ENCODE measurements at regions of chr19 and their contacts with region 1.

Region 1: DNA sequence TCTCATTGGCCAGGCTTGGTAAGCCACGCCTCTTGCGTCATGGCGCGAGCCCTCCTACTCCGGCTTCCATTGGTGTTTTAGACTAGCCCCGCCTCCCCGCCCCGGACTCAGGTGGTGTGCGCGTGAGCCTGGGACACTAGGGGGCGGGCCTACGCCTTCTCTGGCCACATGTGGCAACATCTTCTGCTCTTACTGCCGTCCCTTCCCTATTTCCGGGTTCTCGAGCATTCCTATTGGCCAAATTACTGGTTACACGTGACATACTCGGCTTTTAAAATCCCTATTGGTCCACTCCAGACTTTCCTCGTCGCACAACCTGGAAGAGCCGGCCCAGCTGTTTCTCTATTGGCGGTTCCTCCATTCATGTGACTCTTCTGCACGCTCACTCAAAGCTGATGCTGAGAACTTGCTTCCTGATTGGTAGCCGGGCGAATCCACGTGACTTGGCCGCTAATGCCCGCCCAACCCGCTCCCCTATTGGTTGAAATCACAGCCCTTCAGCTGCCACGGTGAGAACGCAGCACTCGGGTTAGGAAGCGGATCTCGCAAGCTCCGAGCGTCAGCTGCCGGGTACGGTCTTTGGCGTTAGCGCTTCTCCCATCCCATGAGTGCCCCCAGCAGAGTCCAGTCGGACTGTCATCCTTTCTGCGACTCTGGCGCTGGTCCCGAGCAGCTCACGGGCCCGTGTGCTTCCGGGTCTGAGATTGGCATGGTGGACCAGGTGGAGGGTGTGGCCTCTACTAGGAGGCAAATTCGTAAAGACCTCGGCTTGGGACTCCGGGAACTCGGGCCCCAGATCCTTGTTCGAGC is at the start of gene BLOC1S3:
- DNase-seq: peak; percentile 99 to 100 (median 100)
- H3K4me3 ChIP-seq: peak within 1 kb of the TSS; percentile 97 to 100
- H3K4me3 Mint-ChIP-seq: peak within 1 kb of the TSS; percentile 88 to 99 (median 94)
- H3K27ac ChIP-seq: peak within 1 kb of the TSS; percentile 74
- H3K27ac Mint-ChIP-seq: peak within 1 kb of the TSS; percentile 83 to 99 (median 98)
- H3K4me1 ChIP-seq: peaks cover 43% of the 10 kb centered on the region
- H3K4me1 Mint-ChIP-seq: peaks cover 23 to 62% (median 41%) of the 10 kb centered on the region in 4 donors
- H3K27me3 ChIP-seq: no peaks in the 10 kb centered on the region
- H3K27me3 Mint-ChIP-seq: no peaks in the 10 kb centered on the region
- total RNA-seq, gene BLOC1S3: 26.5 to 29.9 TPM

Region 2: GRCh38 chr19:44954824-44955586 is 223.5 kb before region 1 on chr19 and contains the start of gene CLPTM1:
- CTCF ChIA-PET with region 1: interaction called, 3 read pairs
- POLR2A ChIA-PET with region 1: interaction called, 15 read pairs
- intact Hi-C with region 1: loop called (anchors 1 kb)
- DNase-seq: peak; percentile 96
- H3K4me3 ChIP-seq: peak within 1 kb of the TSS; percentile 87 to 96
- H3K4me3 Mint-ChIP-seq: peak within 1 kb of the TSS; percentile 92 to 99 (median 98)
- H3K27ac ChIP-seq: peak within 1 kb of the TSS; percentile 91
- H3K27ac Mint-ChIP-seq: peak within 1 kb of the TSS; percentile 96 to 99 (median 98)
- H3K4me1 ChIP-seq: peaks cover 43% of the 10 kb centered on the region
- H3K4me1 Mint-ChIP-seq: peaks cover 32 to 55% (median 46%) of the 10 kb centered on the region in 4 donors
- H3K27me3 ChIP-seq: no peaks in the 10 kb centered on the region
- H3K27me3 Mint-ChIP-seq: no peaks in the 10 kb centered on the region
- total RNA-seq, gene CLPTM1: 85.1 to 86.4 TPM

Region 3: GRCh38 chr19:45038931-45039893 is 139.3 kb before region 1 on chr19 and contains the start of gene CLASRP:
- CTCF ChIA-PET with region 1: interaction called, 6 read pairs
- POLR2A ChIA-PET with region 1: interaction called, 14 read pairs
- intact Hi-C with region 1: loop called (anchors 1 kb)
- DNase-seq: peak; percentile 85 to 88 (median 86)
- H3K4me3 ChIP-seq: peak within 1 kb of the TSS; percentile 45 to 62
- H3K4me3 Mint-ChIP-seq: peak within 1 kb of the TSS; percentile 95 to 99 (median 98)
- H3K27ac ChIP-seq: peak within 1 kb of the TSS; percentile 98
- H3K27ac Mint-ChIP-seq: peak within 1 kb of the TSS; percentile 88 to 99 (median 98)
- H3K4me1 ChIP-seq: peaks cover 34% of the 10 kb centered on the region
- H3K4me1 Mint-ChIP-seq: peaks cover 21 to 46% (median 29%) of the 10 kb centered on the region in 4 donors
- H3K27me3 ChIP-seq: no peaks in the 10 kb centered on the region
- H3K27me3 Mint-ChIP-seq: no peaks in the 10 kb centered on the region
- total RNA-seq, gene CLASRP: 156 to 163 TPM

Region 4: DNA sequence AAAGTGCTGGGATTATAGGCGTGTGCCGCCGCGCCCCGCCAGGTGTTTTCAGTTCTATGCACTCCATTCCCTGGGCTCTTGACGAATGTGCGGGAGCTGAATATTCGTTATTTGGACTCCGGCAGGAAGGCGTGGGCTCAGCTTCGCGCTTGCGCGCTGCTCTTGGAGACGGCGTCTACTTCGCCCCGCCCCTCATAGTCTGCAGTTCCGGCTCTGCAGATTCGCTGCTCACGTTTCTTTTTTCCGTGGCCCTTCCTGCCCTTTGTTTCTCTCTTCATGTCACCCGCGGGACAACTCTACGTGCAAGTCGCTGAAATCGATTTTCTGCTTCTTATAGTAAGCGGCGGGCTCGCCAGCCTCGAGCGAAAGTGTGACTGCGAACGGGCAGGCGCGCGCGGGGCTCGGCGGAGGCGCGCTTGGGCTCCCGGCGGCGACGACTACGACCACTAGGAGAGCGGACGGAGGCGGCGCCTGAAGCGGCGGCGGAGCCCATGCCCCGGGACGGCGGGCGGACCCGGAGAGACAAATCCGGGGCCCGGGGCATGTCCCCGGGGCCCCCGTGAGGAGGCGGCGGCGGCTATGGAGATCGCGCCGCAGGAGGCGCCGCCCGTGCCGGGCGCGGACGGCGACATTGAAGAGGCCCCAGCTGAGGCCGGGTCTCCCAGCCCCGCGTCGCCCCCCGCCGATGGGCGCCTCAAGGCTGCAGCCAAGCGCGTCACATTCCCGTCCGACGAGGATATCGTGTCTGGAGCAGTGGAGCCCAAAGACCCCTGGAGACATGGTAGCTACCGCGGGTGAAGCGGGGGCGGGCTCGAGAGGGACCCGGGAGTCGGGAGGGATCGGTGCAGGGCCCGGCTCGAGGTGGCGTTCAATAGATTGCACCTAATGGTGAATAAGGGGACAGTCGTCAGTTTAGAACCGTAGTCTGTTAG is 85.5 kb before region 1 on chr19 and contains the start of gene PPP1R37:
- CTCF ChIA-PET with region 1: interaction called, 16 read pairs
- POLR2A ChIA-PET with region 1: interaction called, 58 read pairs
- intact Hi-C with region 1: loop called (anchors 1 kb)
- DNase-seq: peak; percentile 92 to 96 (median 95)
- H3K4me3 ChIP-seq: peak within 1 kb of the TSS; percentile 90 to 94
- H3K4me3 Mint-ChIP-seq: peak within 1 kb of the TSS; percentile 91 to 98 (median 92)
- H3K27ac ChIP-seq: peak within 1 kb of the TSS; percentile 80
- H3K27ac Mint-ChIP-seq: peak within 1 kb of the TSS; percentile 94 to 99 (median 97)
- H3K4me1 ChIP-seq: peaks cover 68% of the 10 kb centered on the region
- H3K4me1 Mint-ChIP-seq: peaks cover 42 to 72% (median 57%) of the 10 kb centered on the region in 4 donors
- H3K27me3 ChIP-seq: no peaks in the 10 kb centered on the region
- H3K27me3 Mint-ChIP-seq: no peaks in the 10 kb centered on the region
- total RNA-seq, gene PPP1R37: 25.2 to 26.2 TPM

Region 5: DNA sequence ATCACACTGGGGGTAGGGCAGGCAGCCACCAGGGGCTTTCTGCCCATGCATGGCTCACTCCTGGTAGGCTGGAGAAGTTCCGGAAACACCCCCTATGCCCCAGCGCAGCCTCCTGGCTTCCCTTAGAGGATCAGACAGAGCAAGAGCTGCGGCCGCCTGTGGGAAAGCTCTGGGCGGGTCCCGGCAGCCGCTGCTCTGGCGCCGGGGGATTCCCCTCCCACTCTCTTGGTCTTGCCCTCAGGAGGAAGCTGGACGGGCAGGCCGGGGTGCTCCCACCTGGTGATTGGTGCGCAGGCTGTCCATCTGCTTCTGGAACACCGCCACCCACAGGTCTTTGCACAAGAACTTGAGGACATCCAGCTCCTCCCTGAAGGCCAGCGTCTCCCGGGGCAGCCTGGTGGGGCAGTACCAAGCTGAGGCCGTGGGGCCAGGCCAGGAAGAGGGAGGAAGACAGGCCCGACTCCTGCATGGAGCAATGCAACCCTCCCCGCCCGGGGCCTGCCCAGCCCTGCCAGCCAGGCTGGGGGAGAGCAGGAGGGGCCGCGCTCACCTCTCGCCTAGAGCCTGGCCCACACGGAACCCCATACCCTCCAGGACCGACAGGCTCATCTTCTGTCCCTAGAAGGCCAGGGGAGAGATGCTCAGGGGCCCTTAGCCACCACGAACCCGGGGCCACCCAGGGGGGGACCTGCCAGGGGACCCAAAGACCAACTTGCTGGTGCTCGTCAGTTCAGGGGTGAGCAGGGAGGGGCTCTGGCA is 13.7 kb before region 1 on chr19:
- CTCF ChIA-PET with region 1: interaction called, 9 read pairs
- POLR2A ChIA-PET with region 1: interaction called, 33 read pairs
- intact Hi-C with region 1: no loop called
- DNase-seq: peak; percentile 46 to 80 (median 49)
- H3K4me3 ChIP-seq: no peak overlapping the region
- H3K4me3 Mint-ChIP-seq: peak overlapping the region in 3 of 8 donors; percentile 17 to 61 (median 21)
- H3K27ac ChIP-seq: peak overlapping the region; percentile 51
- H3K27ac Mint-ChIP-seq: peak overlapping the region; percentile 15 to 90 (median 59)
- H3K4me1 ChIP-seq: peaks cover 36% of the 10 kb centered on the region
- H3K4me1 Mint-ChIP-seq: peaks cover 16 to 46% (median 34%) of the 10 kb centered on the region in 4 donors
- H3K27me3 ChIP-seq: no peaks in the 10 kb centered on the region
- H3K27me3 Mint-ChIP-seq: no peaks in the 10 kb centered on the region

Region 6: GRCh38 chr19:45200568-45200994 is 22.1 kb after region 1 on chr19:
- CTCF ChIA-PET with region 1: no interaction called
- POLR2A ChIA-PET with region 1: no interaction called
- intact Hi-C with region 1: no loop called
- DNase-seq: no peak
- H3K4me3 ChIP-seq: no peak overlapping the region
- H3K4me3 Mint-ChIP-seq: no peak overlapping the region
- H3K27ac ChIP-seq: no peak overlapping the region
- H3K27ac Mint-ChIP-seq: no peak overlapping the region
- H3K4me1 ChIP-seq: no peaks in the 10 kb centered on the region
- H3K4me1 Mint-ChIP-seq: no peaks in the 10 kb centered on the region
- H3K27me3 ChIP-seq: no peaks in the 10 kb centered on the region
- H3K27me3 Mint-ChIP-seq: peaks cover 0 to 1% of the 10 kb centered on the region in 2 donors

Region 7: DNA sequence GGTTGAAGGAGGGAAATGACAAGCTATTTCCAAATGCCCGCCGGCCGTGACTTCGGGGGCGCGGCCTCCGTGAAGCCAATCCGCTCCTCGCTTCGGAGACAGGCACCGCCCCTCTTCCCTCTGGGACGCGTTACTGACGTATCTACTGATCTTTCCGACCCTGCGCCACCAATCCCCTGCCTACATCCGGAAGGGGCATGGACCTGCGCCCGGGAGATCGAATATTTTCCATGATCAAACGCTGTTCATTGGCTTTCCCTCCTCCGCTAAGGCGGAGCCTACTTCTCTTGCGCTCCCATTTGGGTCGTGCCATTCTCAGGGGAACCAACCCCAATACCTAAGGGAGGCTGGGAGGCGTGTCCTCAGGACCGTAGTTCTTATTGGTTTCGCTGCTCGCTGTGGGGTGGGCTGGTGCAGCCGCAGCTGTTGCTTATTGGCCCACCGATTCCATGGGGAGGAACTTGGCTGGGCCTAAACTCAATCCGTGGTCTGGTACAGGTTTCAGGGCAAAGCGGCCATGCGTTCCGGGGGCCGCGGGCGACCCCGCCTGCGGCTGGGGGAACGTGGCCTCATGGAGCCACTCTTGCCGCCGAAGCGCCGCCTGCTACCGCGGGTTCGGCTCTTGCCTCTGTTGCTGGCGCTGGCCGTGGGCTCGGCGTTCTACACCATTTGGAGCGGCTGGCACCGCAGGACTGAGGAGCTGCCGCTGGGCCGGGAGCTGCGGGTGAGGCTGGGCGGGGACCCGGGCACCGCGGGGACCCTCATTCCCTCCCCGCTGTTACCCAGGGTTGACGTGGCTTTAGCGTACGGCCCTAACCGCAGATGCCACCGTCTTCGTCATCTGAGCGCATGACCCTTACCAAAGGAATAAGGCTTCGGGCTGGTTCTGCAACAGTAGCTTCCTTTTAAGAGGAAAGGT is 514.0 kb after region 1 on chr19 and contains the start of gene QPCTL:
- CTCF ChIA-PET with region 1: no interaction called
- POLR2A ChIA-PET with region 1: interaction called, 3 read pairs
- intact Hi-C with region 1: loop called (anchors 1 kb)
- DNase-seq: peak; percentile 98 to 99 (median 98)
- H3K4me3 ChIP-seq: peak within 1 kb of the TSS; percentile 70 to 94
- H3K4me3 Mint-ChIP-seq: peak within 1 kb of the TSS; percentile 90 to 100 (median 94)
- H3K27ac ChIP-seq: peak within 1 kb of the TSS; percentile 88
- H3K27ac Mint-ChIP-seq: peak within 1 kb of the TSS; percentile 91 to 100 (median 97)
- H3K4me1 ChIP-seq: peaks cover 17% of the 10 kb centered on the region
- H3K4me1 Mint-ChIP-seq: peaks cover 11 to 35% (median 17%) of the 10 kb centered on the region in 4 donors
- H3K27me3 ChIP-seq: no peaks in the 10 kb centered on the region
- H3K27me3 Mint-ChIP-seq: no peaks in the 10 kb centered on the region
- total RNA-seq, gene QPCTL: 10.8 to 11.4 TPM